Transverse colon (tissue), 4 donors: ENCODE measurements at regions of chr20 and their contacts with region 1.

Region 1: DNA sequence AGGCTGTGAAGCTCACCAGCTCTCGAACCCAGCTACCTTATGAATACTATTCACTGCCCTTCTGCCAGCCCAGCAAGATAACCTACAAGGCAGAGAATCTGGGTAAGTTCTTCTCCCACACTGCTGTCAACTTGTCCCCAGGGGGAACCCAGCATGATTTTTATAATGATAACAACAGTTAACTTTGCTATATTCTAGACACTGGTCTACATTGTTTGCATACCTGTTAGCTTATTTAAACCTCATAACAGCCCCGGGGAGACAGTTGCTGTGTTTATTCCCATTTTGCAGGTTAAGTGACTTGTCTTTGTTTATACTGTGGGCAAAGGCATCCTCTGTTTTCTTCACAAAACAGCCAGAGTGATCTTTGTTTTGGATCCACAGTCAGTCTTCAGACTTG is 26.6 kb downstream of the TM9SF4 start:
- DNase-seq: no peak
- H3K4me3 ChIP-seq: no peak overlapping the region
- H3K27ac ChIP-seq: no peak overlapping the region
- H3K4me1 ChIP-seq: no peaks in the 10 kb centered on the region
- H3K27me3 ChIP-seq: no peaks in the 10 kb centered on the region
- CTCF ChIP-seq: no peak
- EP300 ChIP-seq: no peak
- POLR2A ChIP-seq: no peak

Region 2: GRCh38 chr20:31908016-31908415 is 228.1 kb before region 1 on chr20:
- in situ Hi-C with region 1: no loop called
- intact Hi-C with region 1: no loop called
- DNase-seq: no peak
- H3K4me3 ChIP-seq: no peak overlapping the region
- H3K27ac ChIP-seq: no peak overlapping the region
- H3K4me1 ChIP-seq: no peaks in the 10 kb centered on the region
- H3K27me3 ChIP-seq: no peaks in the 10 kb centered on the region
- CTCF ChIP-seq: no peak
- EP300 ChIP-seq: no peak
- POLR2A ChIP-seq: no peak

Region 3: GRCh38 chr20:32067234-32067821 is 68.7 kb before region 1 on chr20:
- in situ Hi-C with region 1: no loop called
- intact Hi-C with region 1: no loop called
- DNase-seq: no peak
- H3K4me3 ChIP-seq: no peak overlapping the region
- H3K27ac ChIP-seq: no peak overlapping the region
- H3K4me1 ChIP-seq: no peaks in the 10 kb centered on the region
- H3K27me3 ChIP-seq: peaks cover 6% of the 10 kb centered on the region
- CTCF ChIP-seq: no peak
- EP300 ChIP-seq: no peak
- POLR2A ChIP-seq: no peak

Region 4: DNA sequence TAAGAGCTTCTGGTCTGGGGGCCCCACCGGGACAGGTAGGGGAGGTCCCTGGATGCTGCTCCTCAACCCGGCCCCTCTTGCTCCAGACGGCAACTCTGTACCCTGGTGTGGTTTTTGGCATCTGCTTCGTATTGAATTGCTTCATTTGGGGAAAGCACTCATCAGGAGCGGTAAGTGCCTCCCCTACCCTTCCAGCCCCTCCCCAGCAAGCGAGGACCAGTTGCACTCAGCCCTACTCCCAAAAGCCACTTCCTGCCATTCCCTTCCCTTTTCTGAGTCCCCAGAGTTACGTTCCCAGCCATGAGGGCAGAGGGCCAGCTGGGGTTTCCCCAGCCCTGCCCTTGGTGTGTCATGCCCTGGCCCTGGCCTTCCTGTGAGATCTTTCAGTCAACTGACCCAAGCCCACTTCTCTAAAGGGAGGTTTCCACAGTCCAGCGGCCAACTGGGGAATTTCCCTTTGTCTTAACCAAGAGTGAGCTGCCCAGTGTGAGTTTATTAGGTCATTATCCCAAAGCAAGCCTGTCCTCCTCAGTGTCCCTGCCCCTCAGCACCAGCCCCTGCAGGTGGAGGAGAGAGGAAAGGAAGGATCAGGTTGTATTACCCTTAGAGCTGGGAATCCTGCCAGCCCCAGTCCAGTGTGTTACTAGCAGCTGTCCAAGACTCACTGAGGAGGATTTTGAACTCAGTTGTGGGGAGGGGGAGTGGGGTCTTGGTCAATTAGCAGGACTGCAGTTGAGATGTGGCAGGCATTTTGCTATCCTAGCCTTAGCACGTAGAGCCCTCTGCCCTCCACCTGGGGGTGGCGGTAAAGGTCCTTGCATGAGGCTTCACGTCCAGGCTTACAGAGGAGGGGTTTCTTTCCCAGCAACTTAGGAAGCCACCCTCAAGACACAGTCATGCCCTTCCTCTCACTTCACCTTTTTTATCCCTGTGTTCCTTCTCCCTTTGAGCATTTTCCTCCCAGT is 19.2 kb after region 1 on chr20:
- in situ Hi-C with region 1: no loop called
- intact Hi-C with region 1: loop called (anchors 2 kb)
- DNase-seq: peak; percentile 67
- H3K4me3 ChIP-seq: no peak overlapping the region
- H3K27ac ChIP-seq: peak overlapping the region in 3 of 4 donors; percentile 4 to 43 (median 15)
- H3K4me1 ChIP-seq: peaks cover 0 to 13% (median 7%) of the 10 kb centered on the region in 4 donors
- H3K27me3 ChIP-seq: no peaks in the 10 kb centered on the region
- CTCF ChIP-seq: peak in 3 of 5 experiments; percentile 11 to 27 (median 26)
- EP300 ChIP-seq: no peak
- POLR2A ChIP-seq: no peak